SK-N-SH (cell line): ENCODE measurements at regions of chr11 and their contacts with region 1.

Region 1: DNA sequence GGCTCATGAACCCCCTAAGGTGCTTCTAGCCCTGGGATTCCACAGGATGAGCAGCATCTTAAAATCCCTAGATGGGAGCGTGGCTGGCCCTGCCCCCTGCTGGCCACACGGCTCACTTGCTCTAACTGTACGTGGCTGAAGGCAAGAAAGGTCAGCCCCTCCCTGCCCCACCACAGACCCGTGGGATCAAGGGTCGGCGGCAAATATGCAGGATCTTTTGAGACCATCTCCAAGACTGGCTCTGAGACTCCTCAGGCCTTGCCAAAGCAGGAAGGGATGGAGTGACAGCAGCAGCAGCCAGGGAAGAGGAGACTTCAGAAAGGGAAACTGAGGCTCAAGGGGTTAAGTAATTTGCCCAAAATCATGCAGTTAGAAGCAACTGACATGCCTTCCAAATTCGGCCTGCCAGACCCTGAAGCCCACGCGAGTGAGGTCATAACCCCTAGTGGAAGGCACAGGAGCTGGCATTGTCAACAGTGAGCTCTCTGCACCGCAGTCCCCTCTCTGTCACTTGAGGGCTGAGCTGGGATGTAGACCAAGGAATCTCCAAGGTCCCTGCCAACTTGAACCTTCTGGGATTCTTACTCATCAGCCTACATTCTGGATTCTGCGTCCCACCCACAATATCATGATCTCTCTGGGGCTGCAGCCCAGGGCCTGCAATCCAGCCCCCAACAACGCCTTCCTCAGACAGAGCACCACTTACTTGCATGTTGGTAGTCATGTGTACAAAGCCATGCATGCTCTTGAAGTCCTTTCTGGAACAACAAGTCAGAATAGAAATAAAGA is 31.4 kb downstream of the CREB3L1 start:
- DNase-seq: peak; percentile 92
- H3K4me3 ChIP-seq: peak overlapping the region in 1 of 2 experiments; percentile 35; a peak in 1 of 4 replicates
- H3K27ac ChIP-seq: 0 out of 4 replicates have a peak overlapping the region, but pooled peaks of 1 of the 2 experiments have one; percentile 15
- H3K4me1 ChIP-seq: peaks cover 0 to 2% of the 10 kb centered on the region in 2 experiments; a peak in 1 of 4 replicates
- H3K27me3 ChIP-seq: no peaks in the 10 kb centered on the region
- CTCF ChIP-seq: peak; percentile 93
- EP300 ChIP-seq: no peak
- RAD21 ChIP-seq: peak; percentile 89

Region 2: DNA sequence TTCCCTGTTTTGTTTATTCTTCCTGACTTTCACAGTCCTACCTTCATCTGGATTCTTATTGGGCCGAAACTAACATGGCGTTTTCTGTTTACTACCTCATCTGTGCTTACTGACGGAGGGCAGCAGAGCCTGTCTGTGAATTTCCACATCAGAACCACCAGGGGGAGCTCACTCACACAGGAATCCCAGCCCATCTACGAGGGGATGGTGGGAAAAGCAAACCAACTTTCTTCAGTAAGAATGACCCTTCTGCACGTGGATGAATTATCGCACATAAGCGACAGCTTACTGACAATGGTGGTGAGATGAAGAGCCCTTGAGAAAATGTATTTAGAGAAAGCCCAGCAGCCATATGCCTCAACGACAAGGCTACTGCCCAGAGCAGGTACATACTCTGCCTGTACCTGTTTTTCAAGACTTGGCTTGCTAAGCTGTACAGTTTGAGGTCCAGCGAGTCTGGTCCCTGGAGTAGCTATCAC is 343.9 kb before region 1 on chr11:
- CTCF ChIA-PET with region 1: interaction called, 22 read pairs
- POLR2A ChIA-PET with region 1: no interaction called
- DNase-seq: peak; percentile 81
- H3K4me3 ChIP-seq: no peak overlapping the region; a peak in 1 of 4 replicates
- H3K27ac ChIP-seq: peak overlapping the region in 1 of 2 experiments; percentile 2; a peak in 1 of 4 replicates
- H3K4me1 ChIP-seq: no peaks in the 10 kb centered on the region; a peak in 1 of 4 replicates
- H3K27me3 ChIP-seq: no peaks in the 10 kb centered on the region
- CTCF ChIP-seq: peak; percentile 96
- EP300 ChIP-seq: no peak
- RAD21 ChIP-seq: peak; percentile 91

Region 3: DNA sequence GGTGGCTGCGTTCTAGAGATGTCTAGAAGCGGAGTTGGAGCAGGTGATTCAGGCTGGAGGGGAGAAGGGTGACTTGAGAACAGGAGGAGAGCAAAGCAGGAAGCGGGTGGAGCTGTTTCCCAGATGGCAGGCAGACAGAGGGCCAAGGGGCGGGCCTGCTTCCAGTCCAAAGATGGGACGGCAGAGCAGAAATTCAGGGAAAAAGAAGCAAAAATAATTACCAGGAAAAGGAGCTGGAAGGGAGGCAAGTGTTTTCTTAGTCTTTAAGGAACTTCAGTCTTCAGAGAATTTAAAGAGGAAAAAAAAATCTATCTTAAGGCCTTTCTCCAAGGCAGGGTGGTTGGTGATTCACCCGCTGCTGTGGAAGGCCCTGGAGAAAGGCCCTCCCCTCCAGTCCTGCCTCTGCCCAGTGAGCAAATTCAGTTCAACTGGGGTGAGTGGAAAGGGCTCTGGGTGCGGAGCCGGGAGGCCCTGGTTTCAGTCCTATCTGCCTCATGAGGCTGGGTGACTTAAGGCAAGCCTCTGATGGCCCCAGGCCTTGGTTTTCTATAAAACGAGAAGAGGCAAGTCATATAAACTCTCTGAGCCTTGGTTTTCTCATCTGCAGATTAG is 35.9 kb before region 1 on chr11:
- CTCF ChIA-PET with region 1: interaction called, 21 read pairs
- POLR2A ChIA-PET with region 1: no interaction called
- DNase-seq: no peak
- H3K4me3 ChIP-seq: no peak overlapping the region
- H3K27ac ChIP-seq: peak overlapping the region; percentile 63 to 77; a peak in 3 of 4 replicates
- H3K4me1 ChIP-seq: peaks cover 18 to 26% of the 10 kb centered on the region in 2 experiments; a peak in 3 of 4 replicates
- H3K27me3 ChIP-seq: no peaks in the 10 kb centered on the region
- CTCF ChIP-seq: no peak
- EP300 ChIP-seq: no peak
- RAD21 ChIP-seq: no peak

Region 4: GRCh38 chr11:46285594-46286033 is 23.2 kb before region 1 on chr11:
- CTCF ChIA-PET with region 1: interaction called, 11 read pairs
- POLR2A ChIA-PET with region 1: no interaction called
- DNase-seq: no peak
- H3K4me3 ChIP-seq: no peak overlapping the region
- H3K27ac ChIP-seq: no peak overlapping the region
- H3K4me1 ChIP-seq: peaks cover 11 to 30% of the 10 kb centered on the region in 2 experiments; a peak in 3 of 4 replicates
- H3K27me3 ChIP-seq: no peaks in the 10 kb centered on the region
- CTCF ChIP-seq: no peak
- EP300 ChIP-seq: no peak
- RAD21 ChIP-seq: no peak

Region 5: GRCh38 chr11:46322759-46323158 is 13.9 kb after region 1 on chr11:
- CTCF ChIA-PET with region 1: interaction called, 29 read pairs
- POLR2A ChIA-PET with region 1: no interaction called
- DNase-seq: no peak
- H3K4me3 ChIP-seq: no peak overlapping the region
- H3K27ac ChIP-seq: no peak overlapping the region
- H3K4me1 ChIP-seq: no peaks in the 10 kb centered on the region; a peak in 1 of 4 replicates
- H3K27me3 ChIP-seq: no peaks in the 10 kb centered on the region
- CTCF ChIP-seq: peak; percentile 56
- EP300 ChIP-seq: no peak
- RAD21 ChIP-seq: no peak

Region 6: DNA sequence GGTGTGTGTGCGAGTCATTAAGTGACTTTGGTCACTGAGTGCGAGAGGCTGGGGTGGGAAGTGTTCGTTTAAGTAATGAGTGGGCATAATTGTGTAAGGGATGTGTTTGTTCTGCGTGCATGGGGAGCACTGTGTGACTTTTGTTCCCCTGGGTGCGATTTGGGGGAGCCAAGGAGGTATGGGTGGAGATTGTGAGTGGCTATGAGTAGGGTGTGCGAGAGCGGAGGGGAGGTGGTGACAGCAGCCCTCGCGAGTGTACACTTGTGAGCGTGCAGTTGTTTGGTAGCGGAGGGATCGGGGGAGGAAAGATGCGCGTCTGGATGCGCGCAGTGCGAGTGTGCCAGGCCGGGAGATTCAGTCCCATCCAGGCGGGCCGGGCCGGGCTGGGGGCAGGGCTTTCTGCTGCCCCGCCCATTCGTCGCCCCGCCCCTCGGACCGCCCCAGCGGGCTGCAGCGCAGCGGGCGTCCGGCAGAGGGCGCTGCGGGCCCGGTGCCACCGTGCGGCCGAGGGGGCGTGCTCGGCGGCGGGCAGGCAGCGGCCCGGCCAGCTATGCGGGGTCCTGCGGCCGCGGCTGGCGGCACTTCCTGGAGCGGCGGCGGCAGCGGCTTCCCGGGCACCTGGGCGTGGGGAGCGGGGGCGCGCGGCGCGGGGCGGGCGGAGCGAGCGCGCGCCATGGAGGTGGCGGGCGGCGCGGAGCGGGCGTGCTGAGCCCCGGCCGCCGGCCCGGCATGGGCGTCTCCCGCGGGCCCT is 38.2 kb after region 1 on chr11 and contains the start of gene DGKZ:
- CTCF ChIA-PET with region 1: interaction called, 16 read pairs
- POLR2A ChIA-PET with region 1: no interaction called
- DNase-seq: peak; percentile 100
- H3K4me3 ChIP-seq: peak within 1 kb of the TSS; percentile 82 to 86
- H3K27ac ChIP-seq: peak within 1 kb of the TSS in 1 of 2 experiments; percentile 5; a peak in 1 of 4 replicates
- H3K4me1 ChIP-seq: peaks cover 19 to 22% of the 10 kb centered on the region in 2 experiments; a peak in 3 of 4 replicates
- H3K27me3 ChIP-seq: no peaks in the 10 kb centered on the region
- CTCF ChIP-seq: peak; percentile 53
- EP300 ChIP-seq: no peak
- RAD21 ChIP-seq: peak; percentile 56; the same call in 1 of the 2 replicates
- polyA plus RNA-seq, gene DGKZ: 23.9 and 33.2 TPM in 2 replicates

Region 7: GRCh38 chr11:46380340-46381047 is 71.7 kb after region 1 on chr11:
- CTCF ChIA-PET with region 1: no interaction called
- POLR2A ChIA-PET with region 1: no interaction called
- DNase-seq: peak; percentile 87
- H3K4me3 ChIP-seq: peak overlapping the region; percentile 60 to 63
- H3K27ac ChIP-seq: peak overlapping the region; percentile 61 to 88
- H3K4me1 ChIP-seq: peaks cover 10 to 23% of the 10 kb centered on the region in 2 experiments; a peak in 2 of 4 replicates
- H3K27me3 ChIP-seq: no peaks in the 10 kb centered on the region
- CTCF ChIP-seq: no peak
- EP300 ChIP-seq: no peak
- RAD21 ChIP-seq: no peak

Region 8: DNA sequence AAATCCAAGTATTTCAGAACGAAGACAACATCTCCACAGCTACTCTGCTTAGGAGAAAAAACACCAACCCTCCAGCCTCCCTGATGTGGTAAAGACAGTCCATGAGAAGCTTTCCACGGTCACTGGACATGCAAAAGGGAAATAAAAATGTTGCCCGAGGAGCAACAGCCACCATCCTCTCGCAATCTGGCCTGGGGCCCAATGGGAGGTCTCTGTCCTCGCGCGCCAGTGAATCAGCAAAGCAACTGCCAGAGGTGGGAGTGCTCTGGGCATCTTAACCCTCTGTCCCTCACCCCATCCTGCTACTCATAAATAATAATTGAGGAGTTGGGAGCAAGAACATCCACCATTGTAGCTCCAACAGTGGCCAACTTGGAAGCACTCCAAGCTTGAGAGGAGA is 198.9 kb after region 1 on chr11:
- CTCF ChIA-PET with region 1: no interaction called
- POLR2A ChIA-PET with region 1: no interaction called
- DNase-seq: no peak
- H3K4me3 ChIP-seq: no peak overlapping the region
- H3K27ac ChIP-seq: no peak overlapping the region
- H3K4me1 ChIP-seq: peaks cover 0 to 15% of the 10 kb centered on the region in 2 experiments; a peak in 2 of 4 replicates
- H3K27me3 ChIP-seq: no peaks in the 10 kb centered on the region
- CTCF ChIP-seq: no peak
- EP300 ChIP-seq: no peak
- RAD21 ChIP-seq: no peak